Activated naive CD4-positive, alpha-beta T cell treated with anti-CD3 and anti-CD28 coated beads, Interleukin-2, amount 10 ng/mL, durations not matched to agents 7 days and 5 days (primary cell): ENCODE measurements at regions of chr16 and their contacts with region 1.

Region 1: GRCh38 chr16:58755989-58756649 is 22.0 kb upstream of the GOT2 start:
- DNase-seq: peak; percentile 87
- H3K4me3 Mint-ChIP-seq: peak overlapping the region; percentile 28
- H3K27ac Mint-ChIP-seq: peak overlapping the region; percentile 49
- H3K4me1 Mint-ChIP-seq: peaks cover 8% of the 10 kb centered on the region
- H3K27me3 Mint-ChIP-seq: peaks cover 19% of the 10 kb centered on the region

Region 2: DNA sequence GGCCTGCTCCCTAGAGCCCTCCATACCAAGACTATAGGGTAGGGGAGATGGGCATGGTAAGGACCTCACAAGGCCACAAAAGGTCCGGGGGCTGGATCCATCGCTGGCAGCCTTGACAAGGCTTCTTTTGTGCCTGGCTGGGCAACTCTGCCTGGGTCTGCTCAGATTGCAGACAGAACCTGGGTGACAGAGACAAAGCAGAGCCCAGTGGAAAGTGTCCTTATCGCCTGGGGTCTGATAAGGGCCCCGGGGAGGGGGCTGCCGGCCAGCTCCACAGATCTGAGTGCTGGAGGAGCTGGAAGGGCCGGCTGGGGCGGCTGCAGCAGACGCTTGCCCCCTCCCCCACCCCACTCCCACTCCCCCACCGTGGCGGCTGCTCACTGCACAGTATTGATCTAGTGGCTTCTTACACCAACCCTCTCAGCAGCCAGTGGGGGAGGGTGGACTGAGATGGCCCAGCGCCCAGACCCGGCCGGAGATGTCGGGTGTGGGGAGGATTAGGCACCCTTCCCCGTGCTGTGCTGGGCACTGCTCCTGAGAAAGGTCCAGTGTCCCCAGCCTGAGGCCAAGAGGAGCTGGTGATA is 723.3 kb before region 1 on chr16:
- CTCF ChIA-PET with region 1: no interaction called
- DNase-seq: no peak
- H3K4me3 Mint-ChIP-seq: no peak overlapping the region
- H3K27ac Mint-ChIP-seq: no peak overlapping the region
- H3K4me1 Mint-ChIP-seq: peaks cover 2% of the 10 kb centered on the region
- H3K27me3 Mint-ChIP-seq: peaks cover 23% of the 10 kb centered on the region

Region 3: GRCh38 chr16:58336332-58337089 is 419.6 kb before region 1 on chr16:
- CTCF ChIA-PET with region 1: interaction called, 33 read pairs
- DNase-seq: peak; percentile 90
- H3K4me3 Mint-ChIP-seq: peak overlapping the region; percentile 22
- H3K27ac Mint-ChIP-seq: no peak overlapping the region
- H3K4me1 Mint-ChIP-seq: peaks cover 7% of the 10 kb centered on the region
- H3K27me3 Mint-ChIP-seq: peaks cover 4% of the 10 kb centered on the region

Region 4: DNA sequence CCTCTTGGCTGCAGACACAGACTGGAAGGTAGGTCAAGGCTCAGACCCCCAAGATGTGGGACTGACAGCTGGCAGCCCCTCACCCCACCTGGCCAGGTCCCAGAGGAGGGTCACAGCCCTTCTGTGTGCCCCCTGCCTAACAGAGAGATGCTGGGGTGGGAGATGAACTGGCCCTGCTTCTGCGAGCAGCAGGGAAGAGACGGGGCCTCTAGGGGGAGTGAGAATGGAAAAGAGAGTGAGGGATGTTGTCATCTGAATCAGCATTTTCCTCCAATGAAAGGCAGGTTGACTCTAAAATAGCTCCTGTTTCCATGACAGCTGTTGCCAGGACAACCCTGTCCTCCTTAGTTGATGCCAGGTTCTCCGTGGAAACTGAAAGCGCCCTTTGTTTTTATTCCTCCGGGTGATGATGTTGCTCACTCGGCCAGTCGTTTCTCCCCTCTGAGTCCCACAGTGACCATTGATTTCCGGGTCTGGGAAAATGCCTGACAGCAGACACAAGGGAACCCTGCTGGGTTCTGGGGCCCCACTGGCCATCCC is 261.1 kb before region 1 on chr16:
- CTCF ChIA-PET with region 1: interaction called, 14 read pairs
- DNase-seq: peak; percentile 85
- H3K4me3 Mint-ChIP-seq: no peak overlapping the region
- H3K27ac Mint-ChIP-seq: no peak overlapping the region
- H3K4me1 Mint-ChIP-seq: peaks cover 9% of the 10 kb centered on the region
- H3K27me3 Mint-ChIP-seq: peaks cover 44% of the 10 kb centered on the region

Region 5: GRCh38 chr16:58515125-58515870 is 240.8 kb before region 1 on chr16 and contains the start of gene SETD6:
- CTCF ChIA-PET with region 1: interaction called, 42 read pairs
- DNase-seq: peak; percentile 81
- H3K4me3 Mint-ChIP-seq: peak within 1 kb of the TSS; percentile 80
- H3K27ac Mint-ChIP-seq: peak within 1 kb of the TSS; percentile 84
- H3K4me1 Mint-ChIP-seq: peaks cover 37% of the 10 kb centered on the region
- H3K27me3 Mint-ChIP-seq: no peaks in the 10 kb centered on the region

Region 6: GRCh38 chr16:58678716-58679115 is 77.4 kb before region 1 on chr16:
- CTCF ChIA-PET with region 1: interaction called, 14 read pairs
- DNase-seq: no peak
- H3K4me3 Mint-ChIP-seq: no peak overlapping the region
- H3K27ac Mint-ChIP-seq: no peak overlapping the region
- H3K4me1 Mint-ChIP-seq: peaks cover 11% of the 10 kb centered on the region
- H3K27me3 Mint-ChIP-seq: no peaks in the 10 kb centered on the region

Region 7: DNA sequence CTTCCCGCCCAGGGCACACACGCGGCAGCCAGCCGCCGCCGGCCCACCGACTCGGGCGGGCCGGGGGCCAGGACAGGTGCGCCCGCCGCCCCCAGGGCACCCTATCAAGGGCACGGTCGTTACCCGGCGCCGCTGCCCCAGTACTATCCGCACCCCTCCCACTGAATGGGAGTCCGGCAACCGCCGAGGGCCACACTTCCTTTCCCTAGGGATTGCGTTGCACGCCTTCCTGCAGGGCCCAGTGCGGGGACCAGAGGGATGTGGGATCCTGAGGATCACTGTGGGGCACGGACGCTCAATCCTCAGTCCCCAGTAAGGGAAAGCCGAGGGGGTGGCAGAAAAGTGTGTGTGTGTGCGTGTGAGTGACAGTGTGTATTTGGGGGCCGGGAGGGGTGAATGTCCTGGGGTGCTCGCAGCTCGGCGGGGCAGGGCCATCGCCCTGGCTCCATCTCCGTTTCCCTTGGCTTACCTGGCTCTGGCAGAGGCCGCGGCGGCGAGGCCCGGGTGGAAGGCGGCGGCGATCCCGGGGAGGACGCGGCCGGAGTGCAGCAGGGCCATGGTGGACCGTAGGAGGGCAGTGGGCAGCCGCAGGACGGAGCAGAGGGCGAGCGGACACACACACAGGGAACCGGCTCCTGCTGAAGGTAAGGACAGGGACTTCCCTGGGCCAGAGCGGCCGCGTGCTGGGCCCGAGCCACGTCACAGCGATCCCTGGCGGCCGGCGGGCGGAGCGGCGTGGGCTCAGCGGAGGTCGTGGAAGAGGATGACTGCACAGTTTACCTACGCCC is 22.3 kb before region 1 on chr16 and contains the start of gene GOT2:
- CTCF ChIA-PET with region 1: interaction called, 12 read pairs
- DNase-seq: peak; percentile 83
- H3K4me3 Mint-ChIP-seq: peak within 1 kb of the TSS; percentile 93
- H3K27ac Mint-ChIP-seq: peak within 1 kb of the TSS; percentile 88
- H3K4me1 Mint-ChIP-seq: peaks cover 32% of the 10 kb centered on the region
- H3K27me3 Mint-ChIP-seq: peaks cover 4% of the 10 kb centered on the region